ENCODE measurements at regions of chr17 and their contacts with region 1.

Region 1: DNA sequence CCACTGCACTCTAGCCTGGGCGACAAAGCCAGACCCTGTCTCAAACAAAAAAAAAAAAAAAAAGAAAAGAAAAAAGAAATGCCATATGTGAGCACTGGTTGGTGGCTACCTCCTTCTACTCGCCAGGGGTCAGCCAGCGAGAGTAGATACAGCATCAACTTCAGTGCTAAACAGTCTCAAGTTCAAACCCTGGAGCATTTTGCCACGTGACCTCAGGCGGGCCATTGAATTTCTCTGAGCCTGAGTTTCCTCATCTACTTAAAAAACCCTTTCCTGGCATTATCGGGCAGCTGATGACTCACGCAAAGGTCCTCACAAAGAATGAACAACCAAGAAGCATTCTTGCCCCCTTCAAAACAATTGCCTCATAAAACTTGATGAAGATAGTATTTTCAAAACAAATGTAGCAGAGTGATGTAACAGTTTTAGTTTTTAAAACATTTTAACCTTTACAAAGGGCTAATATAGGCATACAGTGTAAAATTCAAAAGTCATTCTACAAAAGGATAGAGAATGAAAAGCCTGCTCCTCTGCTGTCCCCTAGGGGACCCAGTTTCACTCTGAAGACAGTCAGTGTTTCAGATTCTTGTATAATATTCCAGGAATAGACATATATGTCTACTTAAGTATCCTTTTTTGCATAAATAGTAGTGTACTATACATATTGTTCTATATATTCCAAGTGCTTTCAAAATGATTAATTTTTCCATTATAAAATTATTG is 28.4 kb downstream of the DNAH2 start:
- DNase-seq: no peak
- ATAC-seq: no peak
- H3K4me3 ChIP-seq: no peak overlapping the region
- H3K4me3 Mint-ChIP-seq: no peak overlapping the region
- H3K27ac ChIP-seq: no peak overlapping the region
- H3K27ac Mint-ChIP-seq: no peak overlapping the region
- H3K4me1 ChIP-seq: no peaks in the 10 kb centered on the region
- H3K4me1 Mint-ChIP-seq: no peaks in the 10 kb centered on the region
- H3K27me3 ChIP-seq: no peaks in the 10 kb centered on the region
- H3K27me3 Mint-ChIP-seq: peaks cover 1 to 7% of the 10 kb centered on the region in 2 donors
- CTCF ChIP-seq: no peak

Region 2: GRCh38 chr17:7856883-7857723 is 111.2 kb after region 1 on chr17 and contains the start of gene NAA38:
- intact Hi-C with region 1: loop called (anchors 10 kb)
- DNase-seq: peak; percentile 89 to 99
- ATAC-seq: peak; percentile 75 to 92 (median 82)
- H3K4me3 ChIP-seq: peak within 1 kb of the TSS; percentile 86
- H3K4me3 Mint-ChIP-seq: no peak within 1 kb of the TSS
- H3K27ac ChIP-seq: peak within 1 kb of the TSS; percentile 92
- H3K27ac Mint-ChIP-seq: no peak within 1 kb of the TSS
- H3K4me1 ChIP-seq: peaks cover 33% of the 10 kb centered on the region
- H3K4me1 Mint-ChIP-seq: peaks cover 5 to 9% of the 10 kb centered on the region in 2 donors
- H3K27me3 ChIP-seq: no peaks in the 10 kb centered on the region
- H3K27me3 Mint-ChIP-seq: no peaks in the 10 kb centered on the region
- CTCF ChIP-seq: no peak
- total RNA-seq, gene NAA38: 35.9 to 40.3 (median 37.3) TPM

Region 3: GRCh38 chr17:7931709-7932482 is 186.0 kb after region 1 on chr17 and contains the starts of genes CNTROB and TRAPPC1:
- intact Hi-C with region 1: loop called (anchors 1 kb)
- DNase-seq: peak; percentile 99 to 100
- ATAC-seq: peak; percentile 93 to 99 (median 96)
- H3K4me3 ChIP-seq: peak within 1 kb of the TSS; percentile 74
- H3K4me3 Mint-ChIP-seq: peak within 1 kb of the TSS; percentile 99
- H3K27ac ChIP-seq: peak within 1 kb of the TSS; percentile 79
- H3K27ac Mint-ChIP-seq: peak within 1 kb of the TSS; percentile 96 to 98
- H3K4me1 ChIP-seq: peaks cover 31% of the 10 kb centered on the region
- H3K4me1 Mint-ChIP-seq: peaks cover 36 to 56% of the 10 kb centered on the region in 2 donors
- H3K27me3 ChIP-seq: no peaks in the 10 kb centered on the region
- H3K27me3 Mint-ChIP-seq: no peaks in the 10 kb centered on the region
- CTCF ChIP-seq: no peak
- total RNA-seq, gene CNTROB: 36.3 to 49.8 (median 45.2) TPM
- total RNA-seq, gene TRAPPC1: 122 to 144 (median 135) TPM

Region 4: GRCh38 chr17:7989781-7990655 is 244.1 kb after region 1 on chr17:
- intact Hi-C with region 1: loop called (anchors 1 kb)
- DNase-seq: peak; percentile 94
- ATAC-seq: peak; percentile 89 to 93 (median 91)
- H3K4me3 ChIP-seq: peak overlapping the region; percentile 37
- H3K4me3 Mint-ChIP-seq: peak overlapping the region; percentile 89
- H3K27ac ChIP-seq: peak overlapping the region; percentile 48
- H3K27ac Mint-ChIP-seq: peak overlapping the region; percentile 83 to 91
- H3K4me1 ChIP-seq: peaks cover 16% of the 10 kb centered on the region
- H3K4me1 Mint-ChIP-seq: peaks cover 22 to 25% of the 10 kb centered on the region in 2 donors
- H3K27me3 ChIP-seq: no peaks in the 10 kb centered on the region
- H3K27me3 Mint-ChIP-seq: peaks cover 9 to 11% of the 10 kb centered on the region in 2 donors
- CTCF ChIP-seq: peak; percentile 90

Region 5: DNA sequence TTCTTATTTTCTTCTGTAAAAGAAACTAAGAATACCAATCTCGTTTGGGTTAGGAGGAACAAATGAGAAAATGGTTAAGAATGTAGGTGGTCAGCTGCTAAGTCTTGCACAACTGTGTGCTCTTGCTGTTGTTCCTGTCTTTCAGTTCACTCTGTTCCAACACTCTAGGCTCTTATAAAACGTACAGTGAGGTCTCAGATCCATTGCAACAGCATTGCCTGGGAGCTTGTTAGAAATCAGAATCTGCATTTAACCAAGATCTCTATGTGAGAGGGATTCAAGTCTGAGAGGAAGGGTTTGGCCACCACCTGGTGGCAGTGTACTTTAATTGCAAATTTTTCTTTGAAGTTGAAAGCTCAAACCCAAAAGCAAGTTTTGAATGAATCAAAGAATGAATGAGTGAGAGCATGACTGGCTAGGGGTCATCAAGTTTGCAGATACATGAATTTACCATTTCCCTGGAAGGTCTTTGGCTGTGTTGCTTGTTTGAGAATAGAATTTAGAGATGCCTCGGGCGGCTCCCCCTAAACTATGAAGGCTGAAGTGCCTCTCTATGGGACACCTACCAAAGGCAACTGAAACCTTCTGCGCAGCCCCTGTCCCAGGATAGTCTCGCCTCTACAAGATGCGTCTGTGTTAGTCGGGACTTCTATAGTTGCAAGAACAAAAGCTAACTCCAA is 295.5 kb after region 1 on chr17:
- intact Hi-C with region 1: loop called (anchors 1 kb)
- DNase-seq: peak in 1 of 2 donors; percentile 72
- ATAC-seq: peak; percentile 54 to 64 (median 58)
- H3K4me3 ChIP-seq: no peak overlapping the region
- H3K4me3 Mint-ChIP-seq: no peak overlapping the region
- H3K27ac ChIP-seq: no peak overlapping the region
- H3K27ac Mint-ChIP-seq: no peak overlapping the region
- H3K4me1 ChIP-seq: no peaks in the 10 kb centered on the region
- H3K4me1 Mint-ChIP-seq: peaks cover 5 to 7% of the 10 kb centered on the region in 2 donors
- H3K27me3 ChIP-seq: peaks cover 3% of the 10 kb centered on the region
- H3K27me3 Mint-ChIP-seq: peaks cover 15 to 25% of the 10 kb centered on the region in 2 donors
- CTCF ChIP-seq: peak; percentile 54

Measured in natural killer cell (primary cell).